Lower leg skin (tissue), 4 donors: ENCODE measurements at regions of chr17 and their contacts with region 1.

Region 1: GRCh38 chr17:80967149-80967872 is 24.3 kb upstream of the CHMP6 start:
- DNase-seq: no peak
- H3K4me3 ChIP-seq: no peak overlapping the region
- CTCF ChIP-seq: no peak
- POLR2A ChIP-seq: no peak

Region 2: GRCh38 chr17:81003711-81004475 is 36.6 kb after region 1 on chr17:
- intact Hi-C with region 1: loop called (anchors 1 kb)
- DNase-seq: no peak
- H3K4me3 ChIP-seq: no peak overlapping the region
- CTCF ChIP-seq: no peak
- POLR2A ChIP-seq: no peak

Region 3: GRCh38 chr17:81076141-81076679 is 108.9 kb after region 1 on chr17:
- intact Hi-C with region 1: no loop called
- DNase-seq: no peak
- H3K4me3 ChIP-seq: no peak overlapping the region
- CTCF ChIP-seq: no peak
- POLR2A ChIP-seq: no peak